GM13976 (cell line): ENCODE measurements at regions of chr2 and their contacts with region 1.

Region 1: GRCh38 chr2:57906152-57906732 is 140.4 kb upstream of the VRK2 start:
- DNase-seq: peak; percentile 53
- CTCF ChIP-seq: peak; percentile 76

Region 2: DNA sequence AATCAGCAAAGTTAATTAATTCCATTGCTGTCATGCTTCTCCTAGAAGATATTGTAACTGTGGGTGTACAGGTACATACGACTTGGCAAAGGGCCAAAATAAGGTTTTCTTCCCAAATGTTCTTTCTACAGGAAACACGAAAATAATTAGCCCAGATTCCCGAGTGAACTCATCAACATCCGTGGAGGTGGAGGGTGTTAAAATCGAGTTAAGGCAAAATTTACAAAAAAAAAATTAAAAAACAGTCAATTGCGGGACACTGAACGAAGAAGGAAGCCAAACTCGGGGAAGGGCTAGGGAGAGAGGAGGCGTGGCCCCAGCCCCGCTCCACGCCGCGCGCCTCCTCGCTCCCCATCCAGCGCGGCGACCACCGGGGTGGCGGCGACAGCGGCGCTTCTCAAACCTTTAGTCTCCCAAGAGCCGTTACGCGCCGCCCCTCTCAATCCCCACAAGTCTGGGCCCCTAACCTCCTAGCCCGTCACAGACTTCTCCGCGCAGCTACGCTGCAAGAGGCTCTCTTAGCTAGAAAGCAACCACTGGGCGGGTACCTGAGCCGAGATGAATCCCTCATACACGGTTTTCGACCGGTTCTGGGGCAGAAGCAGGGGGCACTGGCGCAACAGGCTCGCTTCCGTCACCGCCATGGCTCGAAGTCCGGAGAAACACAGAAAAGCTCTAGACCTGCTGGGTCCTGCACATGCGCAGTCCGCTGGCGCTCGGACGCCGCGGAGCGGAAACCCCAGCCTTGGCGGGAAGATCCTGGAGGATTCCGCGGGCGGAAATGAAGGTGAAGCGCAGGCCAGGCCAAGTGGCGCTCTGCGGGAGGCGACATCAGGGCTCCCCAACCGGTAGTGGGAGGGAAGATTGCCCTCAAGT is 334.7 kb after region 1 on chr2 and contains the start of gene FANCL:
- in situ Hi-C with region 1: loop called (anchors 25 kb)
- DNase-seq: peak; percentile 90
- CTCF ChIP-seq: no peak

Region 3: DNA sequence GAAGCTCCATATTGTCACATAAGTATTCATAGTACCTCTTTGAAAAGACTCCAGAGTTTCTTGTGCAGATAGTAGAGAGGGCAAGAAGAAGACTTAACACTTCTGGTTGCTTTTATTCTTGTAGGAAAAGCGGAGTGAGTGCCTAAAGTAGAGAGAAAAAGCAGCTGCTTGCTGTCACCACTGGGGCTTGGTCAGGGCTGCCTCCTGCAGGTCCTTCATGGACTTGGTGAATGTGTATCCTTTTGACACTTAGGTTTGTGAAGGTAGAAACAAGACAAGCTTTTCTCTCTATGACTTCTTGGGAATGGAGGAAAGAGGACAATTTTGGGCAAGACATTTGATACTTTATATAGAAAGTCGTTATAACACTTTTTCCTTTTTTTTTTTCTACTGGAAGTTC is 647.7 kb after region 1 on chr2:
- in situ Hi-C with region 1: loop called (anchors 10 kb)
- DNase-seq: no peak
- CTCF ChIP-seq: peak; percentile 3